ENCODE measurements at regions of chr4 and their contacts with region 1.

Region 1: DNA sequence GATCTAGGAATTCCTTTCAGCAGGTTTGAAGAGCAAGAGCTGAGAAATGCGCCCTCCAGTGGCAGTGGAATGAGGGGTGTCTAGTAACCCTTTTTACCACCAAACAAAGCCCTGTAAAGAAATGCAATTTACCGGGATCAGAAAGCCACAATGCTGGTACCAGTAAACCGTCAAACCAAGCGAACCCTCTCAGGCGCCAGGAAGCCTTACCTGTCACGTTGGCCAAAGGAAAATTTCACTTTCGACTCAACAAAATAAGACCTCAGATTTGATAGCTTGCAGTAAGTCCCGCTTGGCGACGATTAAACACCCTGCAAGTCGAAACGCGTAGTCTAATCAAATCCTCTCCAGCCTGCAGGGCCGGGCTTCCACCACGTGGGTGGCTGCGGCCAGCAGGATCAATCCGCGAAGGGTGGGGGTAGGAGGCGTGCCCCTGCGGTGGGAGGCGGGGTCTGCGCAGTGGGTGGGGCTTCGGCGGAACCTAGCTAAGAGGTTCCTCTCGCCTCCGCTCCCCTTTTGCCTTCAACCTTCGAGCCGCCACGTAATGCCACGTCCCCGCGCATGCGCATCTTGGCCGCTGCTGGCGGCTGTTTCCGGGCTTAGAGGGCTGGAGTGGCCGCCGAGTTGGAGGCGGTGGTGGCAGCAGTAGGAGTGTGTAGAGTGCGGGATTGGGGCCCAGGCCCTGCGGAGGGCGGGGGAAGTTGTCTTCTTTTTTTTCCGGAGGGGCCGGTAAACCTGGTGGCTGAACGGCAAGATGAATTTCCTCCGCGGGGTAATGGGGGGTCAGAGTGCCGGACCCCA is at the start of gene USO1:
- DNase-seq: peak; percentile 99
- H3K4me3 Mint-ChIP-seq: peak within 1 kb of the TSS; percentile 99
- H3K27ac Mint-ChIP-seq: peak within 1 kb of the TSS; percentile 97
- H3K4me1 Mint-ChIP-seq: peaks cover 47% of the 10 kb centered on the region
- H3K27me3 Mint-ChIP-seq: no peaks in the 10 kb centered on the region
- total RNA-seq, gene USO1: 42.1 to 42.4 TPM

Region 2: GRCh38 chr4:75630174-75630936 is 93.9 kb before region 1 on chr4 and contains the start of gene CDKL2:
- CTCF ChIA-PET with region 1: no interaction called
- intact Hi-C with region 1: loop called (anchors 1 kb)
- DNase-seq: peak; percentile 91
- H3K4me3 Mint-ChIP-seq: peak within 1 kb of the TSS; percentile 72
- H3K27ac Mint-ChIP-seq: no peak within 1 kb of the TSS
- H3K4me1 Mint-ChIP-seq: peaks cover 5% of the 10 kb centered on the region
- H3K27me3 Mint-ChIP-seq: no peaks in the 10 kb centered on the region
- total RNA-seq, gene CDKL2: 0.79 to 1.2 TPM

Region 3: GRCh38 chr4:75673027-75673958 is 51.0 kb before region 1 on chr4 and contains the start of gene G3BP2:
- CTCF ChIA-PET with region 1: interaction called, 19 read pairs
- intact Hi-C with region 1: loop called (anchors 1 kb)
- DNase-seq: peak; percentile 99
- H3K4me3 Mint-ChIP-seq: peak within 1 kb of the TSS; percentile 97
- H3K27ac Mint-ChIP-seq: peak within 1 kb of the TSS; percentile 99
- H3K4me1 Mint-ChIP-seq: peaks cover 39% of the 10 kb centered on the region
- H3K27me3 Mint-ChIP-seq: no peaks in the 10 kb centered on the region
- total RNA-seq, gene G3BP2: 134 to 144 TPM

Region 4: DNA sequence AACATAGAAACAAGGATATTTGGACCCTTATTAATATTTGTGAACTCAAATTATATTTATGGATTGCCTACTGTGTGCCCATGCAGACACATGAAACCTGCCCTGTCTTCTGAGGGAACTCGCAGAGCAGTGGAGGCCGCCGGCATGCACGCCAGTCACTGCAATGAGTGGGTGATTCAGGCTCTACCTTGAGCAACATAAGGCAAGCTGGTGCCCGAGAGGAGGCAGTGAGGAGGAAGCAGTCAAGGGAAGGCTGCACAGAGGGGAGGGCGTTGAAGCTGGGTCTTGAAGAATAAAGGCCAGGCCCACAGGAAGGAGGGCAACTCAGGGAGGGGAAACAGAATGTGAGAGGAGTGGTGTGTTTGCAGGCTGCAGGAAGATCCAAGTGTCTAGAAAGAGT is 125.2 kb after region 1 on chr4:
- CTCF ChIA-PET with region 1: interaction called, 7 read pairs
- intact Hi-C with region 1: loop called (anchors 1 kb)
- DNase-seq: no peak
- H3K4me3 Mint-ChIP-seq: no peak overlapping the region
- H3K27ac Mint-ChIP-seq: no peak overlapping the region
- H3K4me1 Mint-ChIP-seq: peaks cover 3% of the 10 kb centered on the region
- H3K27me3 Mint-ChIP-seq: peaks cover 2% of the 10 kb centered on the region

Region 5: GRCh38 chr4:76148142-76148865 is 424.0 kb after region 1 on chr4 and contains the start of gene NUP54:
- CTCF ChIA-PET with region 1: no interaction called
- intact Hi-C with region 1: loop called (anchors 2 kb)
- DNase-seq: peak; percentile 97
- H3K4me3 Mint-ChIP-seq: peak within 1 kb of the TSS; percentile 100
- H3K27ac Mint-ChIP-seq: peak within 1 kb of the TSS; percentile 97
- H3K4me1 Mint-ChIP-seq: peaks cover 27% of the 10 kb centered on the region
- H3K27me3 Mint-ChIP-seq: no peaks in the 10 kb centered on the region
- total RNA-seq, gene NUP54: 43.9 to 53.4 TPM

Measured in activated naive CD4-positive, alpha-beta T cell treated with anti-CD3 and anti-CD28 coated beads for 36 hours (primary cell).